Mammary epithelial cell (primary cell): ENCODE measurements at regions of chr16 and their contacts with region 1.

Region 1: DNA sequence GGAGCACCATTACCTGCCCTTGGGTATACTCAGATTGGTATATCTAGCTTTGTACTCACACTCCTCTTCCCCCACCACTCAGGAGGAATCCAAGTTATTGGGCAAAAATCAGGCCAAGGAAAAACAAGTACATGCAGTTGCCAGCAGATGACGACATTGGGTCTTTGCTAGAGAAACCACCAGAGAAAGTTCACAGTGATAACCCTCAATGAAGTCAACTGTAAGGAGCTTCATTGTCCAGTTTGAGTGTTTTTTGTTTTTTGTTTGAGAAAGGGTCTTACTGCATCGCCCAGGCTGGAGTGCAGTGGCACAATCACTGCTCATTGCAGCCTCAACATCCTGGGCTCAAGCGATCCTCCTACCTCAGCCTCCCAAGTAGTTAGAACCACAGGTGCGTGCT is 34.6 kb upstream of the TOX3 start:
- DNase-seq: no peak
- H3K4me3 ChIP-seq: no peak overlapping the region
- H3K27ac ChIP-seq: no peak overlapping the region
- H3K4me1 ChIP-seq: no peaks in the 10 kb centered on the region
- H3K27me3 ChIP-seq: no peaks in the 10 kb centered on the region
- CTCF ChIP-seq: peak in 1 of 2 donors; percentile 25

Region 2: GRCh38 chr16:52861614-52862022 is 280.1 kb after region 1 on chr16:
- CTCF ChIA-PET with region 1: no interaction called
- dilution Hi-C with region 1: no loop called
- in situ Hi-C with region 1: no loop called
- intact Hi-C with region 1: loop called (anchors 5 kb)
- DNase-seq: peak; percentile 5
- H3K4me3 ChIP-seq: no peak overlapping the region
- H3K27ac ChIP-seq: no peak overlapping the region
- H3K4me1 ChIP-seq: no peaks in the 10 kb centered on the region
- H3K27me3 ChIP-seq: peaks cover 3% of the 10 kb centered on the region
- CTCF ChIP-seq: peak; percentile 31 to 46